IMR-90 (cell line): ENCODE measurements at regions of chr1 and their contacts with region 1.

Region 1: DNA sequence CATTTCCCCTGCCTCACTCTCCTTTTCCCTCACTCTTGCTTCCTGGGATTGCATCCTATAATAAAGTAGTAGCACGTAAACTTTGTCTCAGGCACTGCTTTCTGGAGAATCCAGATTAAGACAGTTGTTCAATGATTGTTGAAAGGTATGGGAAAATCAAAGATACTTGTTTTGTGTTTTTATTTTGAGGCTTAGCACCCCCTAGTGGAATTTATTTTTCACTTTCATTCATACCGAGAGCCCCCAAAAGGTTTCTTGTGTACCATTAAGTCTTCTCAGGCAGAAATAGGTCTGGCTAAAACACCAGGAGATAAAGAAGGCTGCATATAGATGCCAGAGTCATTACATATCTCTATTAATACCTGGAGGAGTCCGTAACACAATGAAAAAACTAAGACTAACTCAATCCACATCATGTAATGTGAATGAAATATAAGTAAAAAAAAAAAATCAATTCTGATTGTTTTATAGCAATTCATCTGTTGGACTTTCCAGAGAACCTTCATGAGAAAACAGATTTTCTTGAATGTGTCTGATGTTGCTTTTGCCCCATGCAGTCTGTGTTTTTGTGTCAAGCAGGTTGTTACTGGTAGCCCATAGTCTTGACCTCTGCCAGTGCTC is 103.5 kb downstream of the RPE65 start:
- DNase-seq: peak; percentile 46
- ATAC-seq: 0 out of 2 replicates have a peak, but pooled peaks have one; percentile 35
- H3K4me3 ChIP-seq: no peak overlapping the region
- H3K27ac ChIP-seq: no peak overlapping the region
- H3K4me1 ChIP-seq: peaks cover 2% of the 10 kb centered on the region
- H3K27me3 ChIP-seq: no peaks in the 10 kb centered on the region
- CTCF ChIP-seq: peak; percentile 51
- POLR2A ChIP-seq: no peak
- RAD21 ChIP-seq: peak; percentile 36

Region 2: GRCh38 chr1:67760030-67760821 is 586.1 kb before region 1 on chr1:
- CTCF ChIA-PET with region 1: no interaction called
- POLR2A ChIA-PET with region 1: no interaction called
- dilution Hi-C with region 1: no loop called
- in situ Hi-C with region 1: no loop called
- intact Hi-C with region 1: loop called (anchors 10 kb)
- DNase-seq: peak; percentile 86
- ATAC-seq: peak; percentile 79
- H3K4me3 ChIP-seq: no peak overlapping the region
- H3K27ac ChIP-seq: peak overlapping the region; percentile 28
- H3K4me1 ChIP-seq: peaks cover 19% of the 10 kb centered on the region
- H3K27me3 ChIP-seq: no peaks in the 10 kb centered on the region
- CTCF ChIP-seq: peak; percentile 78
- POLR2A ChIP-seq: no peak
- RAD21 ChIP-seq: peak; percentile 74

Region 3: DNA sequence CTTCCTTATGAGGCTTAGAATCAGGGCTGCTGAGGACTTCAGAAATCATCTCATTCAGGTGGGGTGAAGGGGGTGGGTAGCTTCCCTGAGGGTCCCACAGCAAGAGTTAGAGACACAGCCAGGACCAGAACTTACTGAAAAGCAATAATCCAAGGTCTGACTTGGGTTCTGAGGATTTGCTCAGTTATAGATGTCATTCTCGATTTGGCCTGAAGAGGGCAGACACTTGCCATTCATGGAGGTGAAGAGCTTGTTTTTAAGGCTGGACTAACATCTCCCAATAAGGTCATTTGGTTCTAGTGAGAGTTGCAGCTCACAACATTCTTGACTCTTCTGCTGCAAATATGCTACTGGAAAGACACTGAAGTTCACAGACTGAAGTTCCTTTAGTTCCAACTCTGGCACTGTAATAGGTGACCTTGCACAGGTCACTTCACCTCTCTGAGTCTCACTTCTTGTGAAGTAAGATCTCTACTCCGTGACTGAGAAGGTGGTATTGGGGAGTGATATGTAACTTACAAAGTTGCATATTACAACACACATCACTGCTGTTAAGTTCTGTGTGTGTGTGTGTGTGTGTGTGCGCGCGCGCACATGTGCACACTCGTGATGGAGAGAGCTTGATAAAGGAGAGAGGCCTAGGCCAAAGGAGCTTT is 226.0 kb before region 1 on chr1:
- CTCF ChIA-PET with region 1: interaction called, 24 read pairs
- POLR2A ChIA-PET with region 1: no interaction called
- dilution Hi-C with region 1: no loop called
- in situ Hi-C with region 1: loop called (anchors 5 kb)
- intact Hi-C with region 1: loop called (anchors 1 kb)
- DNase-seq: peak; percentile 85
- ATAC-seq: peak; percentile 86
- H3K4me3 ChIP-seq: no peak overlapping the region
- H3K27ac ChIP-seq: no peak overlapping the region
- H3K4me1 ChIP-seq: peaks cover 9% of the 10 kb centered on the region
- H3K27me3 ChIP-seq: no peaks in the 10 kb centered on the region
- CTCF ChIP-seq: peak; percentile 85
- POLR2A ChIP-seq: no peak
- RAD21 ChIP-seq: peak; percentile 93

Region 4: DNA sequence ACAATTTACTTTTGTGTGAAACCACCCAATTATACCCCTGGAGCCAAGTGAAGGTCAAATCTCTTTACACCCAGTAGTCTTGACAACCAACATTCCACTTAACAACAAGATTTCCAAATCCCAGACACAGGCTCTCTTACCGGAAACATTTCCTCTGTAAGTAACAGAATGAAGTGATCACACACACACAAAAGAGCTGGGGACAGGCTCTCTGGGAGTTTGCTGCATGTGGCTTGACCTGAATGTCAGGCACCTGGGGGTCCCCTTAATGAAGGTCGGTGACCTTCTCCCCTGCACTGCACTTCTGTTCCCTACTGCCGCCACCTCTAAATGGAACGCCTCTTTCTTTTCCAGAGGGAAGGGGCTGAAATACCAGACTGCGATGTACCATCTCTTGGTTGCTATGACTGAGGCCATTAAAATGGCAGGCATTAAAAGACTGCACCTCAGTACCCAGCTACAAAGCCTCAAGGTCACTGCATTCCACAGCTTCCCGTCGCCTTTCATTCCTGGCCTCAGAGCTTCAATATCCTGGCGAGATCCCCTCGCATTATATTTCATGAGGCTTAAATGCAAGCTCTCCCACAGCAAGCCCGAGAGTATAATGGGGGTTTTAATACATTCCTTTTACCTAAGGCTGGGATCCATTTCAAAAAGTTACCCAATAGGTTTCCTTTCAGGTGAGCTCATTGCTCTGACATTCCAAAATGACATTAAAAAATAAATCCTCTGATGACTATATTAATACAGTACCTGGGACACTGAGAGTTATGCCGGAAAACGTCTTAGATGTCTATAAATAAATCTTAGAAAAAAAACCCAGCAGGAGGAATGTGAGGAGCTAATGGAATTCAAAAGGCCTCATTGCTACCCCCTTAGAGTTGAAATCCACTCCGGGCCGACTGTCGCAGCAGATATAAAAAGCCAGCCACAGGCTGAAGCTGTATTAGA is 205.0 kb before region 1 on chr1:
- CTCF ChIA-PET with region 1: interaction called, 6 read pairs
- POLR2A ChIA-PET with region 1: no interaction called
- dilution Hi-C with region 1: no loop called
- in situ Hi-C with region 1: no loop called
- intact Hi-C with region 1: loop called (anchors 1 kb)
- DNase-seq: peak; percentile 38
- ATAC-seq: peak; percentile 14; the same call in 1 of the 2 replicates
- H3K4me3 ChIP-seq: no peak overlapping the region
- H3K27ac ChIP-seq: peak overlapping the region; percentile 88; the same call in 1 of the 2 replicates
- H3K4me1 ChIP-seq: peaks cover 19% of the 10 kb centered on the region
- H3K27me3 ChIP-seq: no peaks in the 10 kb centered on the region
- CTCF ChIP-seq: no peak
- POLR2A ChIP-seq: no peak
- RAD21 ChIP-seq: no peak

Region 5: GRCh38 chr1:68173911-68174737 is 172.2 kb before region 1 on chr1:
- CTCF ChIA-PET with region 1: interaction called, 3 read pairs
- POLR2A ChIA-PET with region 1: no interaction called
- dilution Hi-C with region 1: no loop called
- in situ Hi-C with region 1: no loop called
- intact Hi-C with region 1: loop called (anchors 5 kb)
- DNase-seq: peak; percentile 98
- ATAC-seq: peak; percentile 77
- H3K4me3 ChIP-seq: no peak overlapping the region
- H3K27ac ChIP-seq: peak overlapping the region; percentile 82
- H3K4me1 ChIP-seq: peaks cover 25% of the 10 kb centered on the region
- H3K27me3 ChIP-seq: no peaks in the 10 kb centered on the region
- CTCF ChIP-seq: no peak
- POLR2A ChIP-seq: no peak
- RAD21 ChIP-seq: no peak

Region 6: GRCh38 chr1:68442822-68443556 is 96.7 kb after region 1 on chr1:
- CTCF ChIA-PET with region 1: interaction called, 7 read pairs
- POLR2A ChIA-PET with region 1: no interaction called
- dilution Hi-C with region 1: no loop called
- in situ Hi-C with region 1: no loop called
- intact Hi-C with region 1: loop called (anchors 1 kb)
- DNase-seq: peak; percentile 82
- ATAC-seq: peak; percentile 96
- H3K4me3 ChIP-seq: no peak overlapping the region
- H3K27ac ChIP-seq: no peak overlapping the region
- H3K4me1 ChIP-seq: no peaks in the 10 kb centered on the region
- H3K27me3 ChIP-seq: no peaks in the 10 kb centered on the region
- CTCF ChIP-seq: peak; percentile 74
- POLR2A ChIP-seq: no peak
- RAD21 ChIP-seq: peak; percentile 67

Region 7: DNA sequence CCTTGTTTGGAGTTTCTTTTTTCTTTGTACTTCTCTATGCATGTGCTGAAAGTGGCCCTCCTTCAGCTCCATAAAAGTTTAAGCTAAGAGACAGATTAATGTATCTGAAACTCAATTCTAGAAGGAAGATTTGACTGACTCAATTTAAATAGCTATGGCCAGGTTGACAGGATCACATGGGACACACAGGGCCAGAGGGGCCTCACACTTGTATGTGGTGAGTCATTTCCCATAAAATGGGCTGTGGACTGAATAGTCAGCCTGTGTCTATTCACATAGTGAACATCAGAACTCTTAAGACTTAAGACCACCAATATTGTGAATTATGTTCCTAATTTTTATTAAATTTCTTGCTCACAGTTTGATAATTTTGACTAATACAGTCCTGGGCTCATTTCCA is 196.3 kb after region 1 on chr1:
- CTCF ChIA-PET with region 1: no interaction called
- POLR2A ChIA-PET with region 1: no interaction called
- dilution Hi-C with region 1: no loop called
- in situ Hi-C with region 1: no loop called
- intact Hi-C with region 1: no loop called
- DNase-seq: no peak
- ATAC-seq: no peak
- H3K4me3 ChIP-seq: no peak overlapping the region
- H3K27ac ChIP-seq: no peak overlapping the region
- H3K4me1 ChIP-seq: no peaks in the 10 kb centered on the region
- H3K27me3 ChIP-seq: no peaks in the 10 kb centered on the region
- CTCF ChIP-seq: no peak
- POLR2A ChIP-seq: no peak
- RAD21 ChIP-seq: no peak